ENCODE measurements at regions of chr3 and their contacts with region 1.

Region 1: GRCh38 chr3:161163297-161163696 is 57.8 kb upstream of the NMD3 start:
- DNase-seq: peak; percentile 30 to 79
- H3K4me3 ChIP-seq: 0 out of 2 replicates have a peak overlapping the region, but pooled peaks have one; percentile 4
- H3K27ac ChIP-seq: peak overlapping the region; percentile 48
- H3K4me1 ChIP-seq: peaks cover 4% of the 10 kb centered on the region; the same call in 1 of the 2 replicates
- H3K27me3 ChIP-seq: no peaks in the 10 kb centered on the region
- CTCF ChIP-seq: no peak

Region 2: GRCh38 chr3:160210799-160211221 is 952.5 kb before region 1 on chr3:
- CTCF ChIA-PET with region 1: no interaction called
- POLR2A ChIA-PET with region 1: no interaction called
- intact Hi-C with region 1: no loop called
- DNase-seq: peak in 1 of 2 experiments; percentile 49
- H3K4me3 ChIP-seq: no peak overlapping the region
- H3K27ac ChIP-seq: no peak overlapping the region
- H3K4me1 ChIP-seq: no peaks in the 10 kb centered on the region
- H3K27me3 ChIP-seq: no peaks in the 10 kb centered on the region
- CTCF ChIP-seq: peak; percentile 50; the same call in 1 of the 2 replicates

Region 3: GRCh38 chr3:160804762-160805161 is 358.5 kb before region 1 on chr3:
- CTCF ChIA-PET with region 1: no interaction called
- POLR2A ChIA-PET with region 1: interaction called, 14 read pairs
- intact Hi-C with region 1: no loop called
- DNase-seq: no peak
- H3K4me3 ChIP-seq: no peak overlapping the region
- H3K27ac ChIP-seq: no peak overlapping the region
- H3K4me1 ChIP-seq: no peaks in the 10 kb centered on the region
- H3K27me3 ChIP-seq: no peaks in the 10 kb centered on the region
- CTCF ChIP-seq: no peak

Region 4: DNA sequence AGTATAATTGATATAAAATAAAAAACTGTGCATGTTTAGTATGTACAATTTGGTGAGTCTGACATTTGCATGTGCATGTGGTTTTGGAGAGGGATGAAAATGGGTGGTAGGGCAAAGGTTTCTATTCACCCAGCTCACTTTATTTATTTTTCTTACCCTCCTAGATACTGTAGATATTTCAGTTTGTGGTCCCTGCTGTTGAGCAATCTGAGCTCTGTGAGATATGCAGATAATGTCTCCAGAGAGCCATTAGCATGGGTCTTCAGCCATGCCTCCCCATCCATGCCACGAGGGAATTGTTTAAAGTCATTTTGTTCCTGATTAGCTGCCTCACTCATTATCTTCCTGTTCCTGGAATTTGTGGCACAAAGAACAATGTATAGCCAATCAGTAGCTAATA is 13.8 kb before region 1 on chr3:
- CTCF ChIA-PET with region 1: no interaction called
- POLR2A ChIA-PET with region 1: no interaction called
- intact Hi-C with region 1: no loop called
- DNase-seq: no peak
- H3K4me3 ChIP-seq: no peak overlapping the region
- H3K27ac ChIP-seq: no peak overlapping the region; the same call in 1 of the 2 replicates
- H3K4me1 ChIP-seq: peaks cover 20% of the 10 kb centered on the region
- H3K27me3 ChIP-seq: no peaks in the 10 kb centered on the region
- CTCF ChIP-seq: no peak

Region 5: GRCh38 chr3:161177996-161178395 is 14.7 kb after region 1 on chr3:
- CTCF ChIA-PET with region 1: no interaction called
- POLR2A ChIA-PET with region 1: no interaction called
- intact Hi-C with region 1: no loop called
- DNase-seq: no peak
- H3K4me3 ChIP-seq: no peak overlapping the region
- H3K27ac ChIP-seq: no peak overlapping the region
- H3K4me1 ChIP-seq: no peaks in the 10 kb centered on the region; the same call in 1 of the 2 replicates
- H3K27me3 ChIP-seq: no peaks in the 10 kb centered on the region
- CTCF ChIP-seq: no peak

Region 6: DNA sequence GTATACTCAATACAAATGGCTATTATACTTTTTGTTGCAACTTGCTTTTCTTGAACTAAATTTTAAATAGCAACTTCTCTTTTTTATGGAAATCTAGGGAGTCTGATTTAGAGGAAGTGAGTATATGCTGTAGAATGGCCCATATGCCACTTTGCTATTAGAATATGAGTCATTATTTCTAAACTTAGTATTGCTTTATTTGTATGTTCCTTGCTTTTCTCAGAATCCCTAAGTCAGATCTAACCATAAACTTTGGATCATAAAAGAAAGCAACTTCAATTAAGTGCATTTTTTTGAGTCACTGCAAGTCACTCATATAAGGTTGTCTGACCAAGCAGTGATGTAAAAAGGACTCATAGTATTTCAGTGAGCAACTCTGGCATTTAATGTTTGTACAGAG is 225.6 kb after region 1 on chr3:
- CTCF ChIA-PET with region 1: no interaction called
- POLR2A ChIA-PET with region 1: no interaction called
- intact Hi-C with region 1: no loop called
- DNase-seq: no peak
- H3K4me3 ChIP-seq: no peak overlapping the region
- H3K27ac ChIP-seq: no peak overlapping the region
- H3K4me1 ChIP-seq: no peaks in the 10 kb centered on the region
- H3K27me3 ChIP-seq: no peaks in the 10 kb centered on the region
- CTCF ChIP-seq: no peak

Measured in PC-9 (cell line).